Posterior vena cava (tissue), 2 donors: ENCODE measurements at regions of chr12 and their contacts with region 1.

Region 1: DNA sequence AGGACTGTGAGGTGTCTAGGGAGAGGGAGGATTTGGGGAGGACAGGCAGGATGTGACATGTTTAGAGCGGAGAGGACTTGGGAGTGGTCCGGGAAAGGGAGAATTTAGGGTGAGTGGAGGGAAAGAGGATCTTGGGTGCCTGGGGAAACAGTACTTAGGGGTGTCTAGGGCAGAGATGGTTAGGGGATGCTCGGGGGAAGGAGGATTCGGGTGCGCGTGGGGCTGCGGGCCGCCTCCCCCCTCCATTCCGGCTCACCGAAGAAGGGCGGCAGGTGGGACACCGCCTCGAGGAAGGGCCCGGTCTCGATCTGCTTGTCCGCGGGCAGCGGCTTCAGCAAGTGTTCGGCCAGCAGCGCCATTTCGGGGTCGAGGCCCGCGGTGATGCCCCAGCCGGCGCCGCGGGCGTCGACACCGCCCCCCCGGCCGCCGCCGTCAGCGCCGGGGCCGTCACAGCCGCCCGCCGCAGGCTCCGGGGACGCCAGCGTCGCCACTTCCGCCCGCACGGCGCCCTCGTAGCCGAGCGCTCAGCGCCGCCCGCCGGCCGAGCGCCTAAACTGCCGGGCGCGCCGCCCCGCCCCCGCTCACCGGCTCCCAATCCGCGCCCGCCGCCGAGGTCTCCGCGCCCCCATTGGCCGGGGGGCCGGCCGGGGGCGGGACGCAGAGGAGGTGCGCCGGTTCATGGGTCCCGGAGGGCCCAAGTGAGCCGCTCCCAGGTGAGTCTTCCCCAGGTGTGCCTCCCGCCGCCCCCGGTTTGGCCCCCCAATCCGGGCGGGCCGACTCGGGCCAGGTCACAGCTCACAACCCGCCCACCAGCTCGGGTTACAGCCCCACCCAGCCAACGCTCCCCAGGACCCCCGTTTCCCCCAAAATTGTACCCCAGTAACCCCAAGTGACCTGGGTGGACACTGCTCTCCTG is at the start of gene GLTP:
- DNase-seq: peak; percentile 95
- total RNA-seq, gene GLTP: 34.9 to 36.4 TPM

Region 2: GRCh38 chr12:109804820-109805761 is 75.2 kb before region 1 on chr12:
- intact Hi-C with region 1: loop called (anchors 10 kb)
- DNase-seq: peak; percentile 92